Common myeloid progenitor, CD34-positive (primary cell): ENCODE measurements at regions of chr7 and their contacts with region 1.

Region 1: GRCh38 chr7:128830231-128831177 is at the start of gene FLNC:
- DNase-seq: peak; percentile 36 to 74 (median 63)
- H3K4me3 ChIP-seq: peak within 1 kb of the TSS; percentile 12 to 65 (median 48)
- H3K27ac ChIP-seq: peak within 1 kb of the TSS in 1 of 2 experiments; percentile 75
- H3K4me1 ChIP-seq: peaks cover 0 to 45% (median 44%) of the 10 kb centered on the region in 4 experiments
- H3K27me3 ChIP-seq: peaks cover 0 to 28% (median 4%) of the 10 kb centered on the region in 5 experiments

Region 2: DNA sequence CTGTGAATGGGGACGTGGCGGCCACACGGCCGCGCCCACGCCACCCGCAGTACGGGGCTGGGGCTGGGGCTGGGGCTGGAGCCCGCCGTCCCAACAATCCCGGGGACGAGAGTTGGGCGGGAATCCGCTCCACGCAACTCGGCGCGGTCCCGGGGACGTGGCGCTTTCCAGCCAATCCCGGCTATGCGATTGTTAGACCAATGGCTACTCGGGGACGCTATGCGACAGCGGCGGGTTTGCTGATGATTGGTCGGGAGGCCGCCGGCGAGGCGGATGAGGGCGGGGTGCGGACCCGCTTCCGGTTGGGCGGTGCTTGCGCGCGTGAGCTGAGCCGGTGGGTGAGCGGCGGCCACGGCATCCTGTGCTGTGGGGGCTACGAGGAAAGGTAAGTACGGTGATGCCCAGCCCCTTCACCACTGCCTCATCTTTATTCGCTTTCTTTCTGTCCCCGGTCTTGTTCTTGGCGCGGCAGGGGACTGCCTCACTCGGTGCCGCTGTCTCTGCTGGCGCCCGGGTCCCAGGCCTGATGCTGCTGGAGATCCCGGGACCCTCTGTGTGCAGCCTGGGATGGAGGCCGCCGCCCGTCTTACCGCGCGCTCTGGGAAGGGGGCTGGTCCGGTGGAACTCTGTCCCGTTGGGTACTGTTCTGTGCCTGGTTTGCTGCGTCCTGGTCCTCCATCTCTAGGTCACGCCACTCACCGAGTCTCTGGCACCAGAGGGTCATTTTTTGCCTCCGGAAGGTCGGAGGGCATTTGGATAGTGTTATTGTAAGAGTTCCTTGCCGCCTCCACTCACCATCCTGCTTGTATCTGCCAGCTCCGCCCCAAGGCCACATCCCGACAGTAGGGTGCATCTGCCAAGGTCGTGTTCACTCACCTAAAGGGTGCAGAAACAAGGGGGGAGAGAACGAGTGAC is 91.2 kb before region 1 on chr7 and contains the start of gene CALU:
- CTCF ChIA-PET with region 1: no interaction called
- POLR2A ChIA-PET with region 1: no interaction called
- DNase-seq: peak; percentile 91 to 96 (median 96)
- H3K4me3 ChIP-seq: peak within 1 kb of the TSS; percentile 87 to 99 (median 93)
- H3K27ac ChIP-seq: peak within 1 kb of the TSS; percentile 59 to 86
- H3K4me1 ChIP-seq: peaks cover 7 to 34% (median 24%) of the 10 kb centered on the region in 4 experiments
- H3K27me3 ChIP-seq: no peaks in the 10 kb centered on the region

Region 3: GRCh38 chr7:128841921-128842651 is 11.6 kb after region 1 on chr7:
- CTCF ChIA-PET with region 1: interaction called, 28 read pairs
- POLR2A ChIA-PET with region 1: interaction called, 3 read pairs
- DNase-seq: peak; percentile 56 to 70 (median 66)
- H3K4me3 ChIP-seq: peak overlapping the region in 2 of 7 experiments; percentile 26 to 75
- H3K27ac ChIP-seq: no peak overlapping the region
- H3K4me1 ChIP-seq: peaks cover 0 to 6% (median 2%) of the 10 kb centered on the region in 4 experiments
- H3K27me3 ChIP-seq: no peaks in the 10 kb centered on the region

Region 4: GRCh38 chr7:128862571-128863432 is 32.3 kb after region 1 on chr7 and contains the start of gene ATP6V1F:
- CTCF ChIA-PET with region 1: interaction called, 12 read pairs
- POLR2A ChIA-PET with region 1: no interaction called
- DNase-seq: peak; percentile 96 to 98 (median 97)
- H3K4me3 ChIP-seq: peak within 1 kb of the TSS; percentile 61 to 95 (median 93)
- H3K27ac ChIP-seq: peak within 1 kb of the TSS; percentile 85 to 92
- H3K4me1 ChIP-seq: peaks cover 3 to 39% (median 36%) of the 10 kb centered on the region in 4 experiments
- H3K27me3 ChIP-seq: no peaks in the 10 kb centered on the region